ENCODE measurements at regions of chr5 and their contacts with region 1.

Region 1: GRCh38 chr5:110757118-110757729 is 18.4 kb downstream of the SLC25A46 start:
- DNase-seq: no peak
- ATAC-seq: no peak
- H3K4me3 ChIP-seq: no peak overlapping the region
- H3K27ac ChIP-seq: no peak overlapping the region
- H3K4me1 ChIP-seq: no peaks in the 10 kb centered on the region
- H3K27me3 ChIP-seq: no peaks in the 10 kb centered on the region
- CTCF ChIP-seq: peak; percentile 60 to 80 (median 71)
- POLR2A ChIP-seq: no peak

Region 2: GRCh38 chr5:111063700-111064322 is 306.6 kb after region 1 on chr5:
- intact Hi-C with region 1: loop called in 7 of 10 experiments (anchors 2 to 10 kb)
- DNase-seq: no peak
- ATAC-seq: no peak
- H3K4me3 ChIP-seq: no peak overlapping the region
- H3K27ac ChIP-seq: no peak overlapping the region
- H3K4me1 ChIP-seq: no peaks in the 10 kb centered on the region
- H3K27me3 ChIP-seq: peaks cover 0 to 26% (median 0%) of the 10 kb centered on the region in 9 donors
- CTCF ChIP-seq: peak in 9 of 12 donors; percentile 17 to 55 (median 39)
- POLR2A ChIP-seq: no peak

Region 3: GRCh38 chr5:111092062-111092853 is 335.0 kb after region 1 on chr5 and contains the start of gene WDR36:
- intact Hi-C with region 1: loop called in 5 of 10 experiments (anchors 5 to 10 kb)
- DNase-seq: peak; percentile 87 to 93 (median 92)
- ATAC-seq: peak; percentile 95 to 99 (median 99)
- H3K4me3 ChIP-seq: peak within 1 kb of the TSS; percentile 55 to 99 (median 84)
- H3K27ac ChIP-seq: peak within 1 kb of the TSS; percentile 11 to 91 (median 78)
- H3K4me1 ChIP-seq: peaks cover 0 to 29% (median 14%) of the 10 kb centered on the region in 12 donors
- H3K27me3 ChIP-seq: no peaks in the 10 kb centered on the region
- CTCF ChIP-seq: peak in 2 of 12 donors; percentile 6 to 12
- POLR2A ChIP-seq: peak in 1 of 2 donors; percentile 49
- total RNA-seq, gene WDR36: 10.3 to 18.0 (median 13.1) TPM

Measured in heart left ventricle (tissue), 16 donors.